Esophagus muscularis mucosa (tissue), 4 donors: ENCODE measurements at regions of chr4 and their contacts with region 1.

Region 1: GRCh38 chr4:83503974-83504373 is 19.1 kb upstream of the ABRAXAS1 start:
- DNase-seq: no peak
- H3K4me3 ChIP-seq: no peak overlapping the region
- H3K27ac ChIP-seq: no peak overlapping the region
- H3K4me1 ChIP-seq: no peaks in the 10 kb centered on the region
- H3K27me3 ChIP-seq: no peaks in the 10 kb centered on the region
- CTCF ChIP-seq: no peak
- EP300 ChIP-seq: no peak
- POLR2A ChIP-seq: no peak

Region 2: GRCh38 chr4:83639849-83640493 is 136.0 kb after region 1 on chr4:
- intact Hi-C with region 1: loop called (anchors 1 kb)
- DNase-seq: no peak
- H3K4me3 ChIP-seq: no peak overlapping the region
- H3K27ac ChIP-seq: no peak overlapping the region
- H3K4me1 ChIP-seq: peaks cover 0 to 6% (median 2%) of the 10 kb centered on the region in 4 donors
- H3K27me3 ChIP-seq: no peaks in the 10 kb centered on the region
- CTCF ChIP-seq: peak; percentile 83 to 86 (median 85)
- EP300 ChIP-seq: no peak
- POLR2A ChIP-seq: no peak

Region 3: GRCh38 chr4:84238247-84239090 is 734.5 kb after region 1 on chr4:
- intact Hi-C with region 1: no loop called
- DNase-seq: no peak
- H3K4me3 ChIP-seq: no peak overlapping the region
- H3K27ac ChIP-seq: peak overlapping the region; percentile 55 to 60 (median 56)
- H3K4me1 ChIP-seq: peaks cover 0 to 37% (median 20%) of the 10 kb centered on the region in 4 donors
- H3K27me3 ChIP-seq: no peaks in the 10 kb centered on the region
- CTCF ChIP-seq: peak; percentile 38 to 49 (median 42)
- EP300 ChIP-seq: no peak
- POLR2A ChIP-seq: no peak